OCI-LY7 (cell line): ENCODE measurements at regions of chr7 and their contacts with region 1.

Region 1: DNA sequence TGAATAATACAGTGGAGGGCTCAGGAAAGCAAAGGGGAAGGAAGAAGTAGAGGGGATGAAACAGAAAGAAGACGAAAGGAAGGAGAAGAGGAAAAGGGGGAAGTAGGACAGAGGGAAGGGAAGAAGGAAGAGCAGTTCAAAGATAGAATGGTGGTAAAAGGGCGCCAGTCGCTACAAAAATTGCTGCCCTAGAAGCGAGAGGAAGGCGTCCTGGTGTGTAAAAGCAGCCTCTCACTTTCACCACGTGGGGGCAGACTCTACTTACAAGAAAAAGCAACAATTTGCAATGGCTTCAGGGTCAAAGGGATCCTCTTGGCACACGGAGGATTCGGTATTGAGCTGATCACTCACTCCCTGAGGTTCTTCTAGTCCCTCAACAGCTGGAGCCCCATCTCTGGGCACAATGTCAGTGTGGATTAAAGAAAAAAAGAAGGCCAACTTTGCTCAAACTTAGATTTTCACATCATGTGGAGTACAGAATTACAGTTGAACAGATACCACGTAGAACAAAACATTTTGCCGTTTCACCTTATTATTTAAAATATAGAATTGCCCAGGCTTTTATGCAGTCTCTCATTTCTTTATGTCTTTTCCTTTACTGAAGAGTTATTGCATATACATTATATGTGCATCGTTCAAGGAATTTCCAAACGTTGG is 31.4 kb upstream of the NPVF start:
- DNase-seq: peak; percentile 83
- H3K4me3 ChIP-seq: no peak overlapping the region
- H3K27ac ChIP-seq: no peak overlapping the region
- H3K4me1 ChIP-seq: peaks cover 16% of the 10 kb centered on the region
- CTCF ChIP-seq: peak; percentile 87

Region 2: GRCh38 chr7:25191640-25192039 is 68.1 kb before region 1 on chr7:
- CTCF ChIA-PET with region 1: no interaction called
- POLR2A ChIA-PET with region 1: no interaction called
- intact Hi-C with region 1: no loop called
- DNase-seq: no peak
- H3K4me3 ChIP-seq: no peak overlapping the region
- H3K27ac ChIP-seq: no peak overlapping the region
- H3K4me1 ChIP-seq: no peaks in the 10 kb centered on the region
- CTCF ChIP-seq: no peak

Region 3: GRCh38 chr7:25369786-25370185 is 110.1 kb after region 1 on chr7:
- CTCF ChIA-PET with region 1: no interaction called
- POLR2A ChIA-PET with region 1: no interaction called
- intact Hi-C with region 1: no loop called
- DNase-seq: no peak
- H3K4me3 ChIP-seq: no peak overlapping the region
- H3K27ac ChIP-seq: no peak overlapping the region
- H3K4me1 ChIP-seq: no peaks in the 10 kb centered on the region
- CTCF ChIP-seq: no peak

Region 4: DNA sequence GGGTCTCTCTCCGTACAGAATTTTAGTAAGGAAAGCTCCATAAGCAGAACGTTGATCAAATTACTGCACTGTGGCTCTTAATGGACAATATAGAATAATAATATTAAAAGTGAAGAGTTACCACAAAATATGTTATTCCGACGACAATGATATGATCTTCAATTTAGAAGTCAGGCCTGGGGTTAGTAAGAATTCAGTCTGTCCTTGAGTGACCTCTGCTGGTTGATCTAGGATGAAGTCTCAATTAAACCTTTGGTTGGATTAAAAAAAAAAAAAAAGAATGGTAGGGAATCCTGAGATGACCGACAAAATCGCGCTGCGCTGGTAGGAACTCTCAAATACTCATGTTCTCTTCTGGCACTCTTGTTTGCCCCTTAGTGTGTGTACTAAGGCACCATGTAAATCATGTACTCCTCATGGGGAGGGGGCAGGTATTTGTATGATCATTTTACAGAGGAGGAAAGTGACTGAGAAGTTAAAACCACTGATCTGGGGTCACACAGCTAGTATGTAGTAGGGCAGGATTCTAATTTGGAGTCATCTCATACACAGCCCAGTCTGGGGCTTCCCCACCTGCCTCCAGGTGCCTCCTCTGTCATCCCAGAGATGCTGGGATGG is 129.9 kb after region 1 on chr7:
- CTCF ChIA-PET with region 1: no interaction called
- POLR2A ChIA-PET with region 1: no interaction called
- intact Hi-C with region 1: loop called (anchors 1 kb)
- DNase-seq: peak; percentile 50
- H3K4me3 ChIP-seq: no peak overlapping the region
- H3K27ac ChIP-seq: no peak overlapping the region
- H3K4me1 ChIP-seq: no peaks in the 10 kb centered on the region
- CTCF ChIP-seq: peak; percentile 82

Region 5: DNA sequence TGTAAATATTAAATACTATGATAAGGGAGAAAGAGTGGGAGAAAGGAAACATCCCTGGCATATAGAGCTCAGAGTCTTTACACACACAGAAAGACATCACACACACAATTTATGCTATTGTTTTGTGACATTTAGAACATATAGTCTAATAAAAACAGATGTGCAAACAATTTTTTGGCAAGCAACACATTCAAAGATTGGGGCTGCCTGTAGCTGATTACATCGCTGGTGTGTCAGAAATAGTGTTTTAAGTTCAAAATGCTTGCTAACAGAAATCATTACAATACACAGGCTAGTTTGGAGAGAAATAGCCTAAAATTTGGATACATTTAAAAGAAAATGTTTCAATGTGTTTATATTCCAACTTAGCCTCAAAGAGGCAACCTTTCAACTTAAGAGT is 225.3 kb after region 1 on chr7:
- CTCF ChIA-PET with region 1: no interaction called
- POLR2A ChIA-PET with region 1: no interaction called
- intact Hi-C with region 1: no loop called
- DNase-seq: no peak
- H3K4me3 ChIP-seq: no peak overlapping the region
- H3K27ac ChIP-seq: no peak overlapping the region
- H3K4me1 ChIP-seq: no peaks in the 10 kb centered on the region
- CTCF ChIP-seq: no peak

Region 6: GRCh38 chr7:25565949-25566348 is 306.2 kb after region 1 on chr7:
- CTCF ChIA-PET with region 1: interaction called, 3 read pairs
- POLR2A ChIA-PET with region 1: no interaction called
- intact Hi-C with region 1: loop called (anchors 1 kb)
- DNase-seq: peak; percentile 69
- H3K4me3 ChIP-seq: no peak overlapping the region
- H3K27ac ChIP-seq: no peak overlapping the region
- H3K4me1 ChIP-seq: peaks cover 7% of the 10 kb centered on the region
- CTCF ChIP-seq: peak; percentile 100